PC-9 (cell line): ENCODE measurements at regions of chr2 and their contacts with region 1.

Region 1: GRCh38 chr2:214946949-214947348 is 137.5 kb upstream of the BARD1 start:
- DNase-seq: no peak
- H3K4me3 ChIP-seq: no peak overlapping the region
- H3K27ac ChIP-seq: no peak overlapping the region
- H3K4me1 ChIP-seq: no peaks in the 10 kb centered on the region
- H3K27me3 ChIP-seq: no peaks in the 10 kb centered on the region
- CTCF ChIP-seq: no peak

Region 2: DNA sequence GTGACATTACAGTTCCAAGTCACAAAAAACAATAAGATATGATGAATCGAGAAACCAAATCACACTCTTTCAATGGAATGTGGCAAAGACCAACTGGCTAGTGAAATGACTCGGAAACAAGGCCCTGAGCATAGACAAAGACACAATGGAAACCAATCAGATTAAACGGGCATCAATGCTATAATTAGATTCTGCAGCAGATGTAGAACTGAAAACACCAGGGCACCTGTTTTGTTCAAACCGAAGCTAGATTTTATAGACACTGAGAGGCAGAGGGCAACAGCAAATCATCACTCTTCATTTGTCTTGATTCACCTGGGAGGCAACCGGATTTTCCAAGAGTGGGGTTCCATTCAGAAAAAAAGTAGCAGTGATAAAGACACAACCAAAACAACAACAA is 44.7 kb before region 1 on chr2:
- CTCF ChIA-PET with region 1: no interaction called
- POLR2A ChIA-PET with region 1: no interaction called
- intact Hi-C with region 1: loop called (anchors 5 kb)
- DNase-seq: no peak
- H3K4me3 ChIP-seq: no peak overlapping the region
- H3K27ac ChIP-seq: no peak overlapping the region
- H3K4me1 ChIP-seq: no peaks in the 10 kb centered on the region
- H3K27me3 ChIP-seq: no peaks in the 10 kb centered on the region
- CTCF ChIP-seq: no peak